IMR-90 (cell line): ENCODE measurements at regions of chr1 and their contacts with region 1.

Region 1: GRCh38 chr1:169106095-169106920 is at the start of gene ATP1B1:
- DNase-seq: peak; percentile 71
- ATAC-seq: peak; percentile 90
- H3K4me3 ChIP-seq: peak within 1 kb of the TSS; percentile 97
- H3K27ac ChIP-seq: peak within 1 kb of the TSS; percentile 64
- H3K4me1 ChIP-seq: peaks cover 17% of the 10 kb centered on the region
- H3K27me3 ChIP-seq: peaks cover 7% of the 10 kb centered on the region
- CTCF ChIP-seq: peak; percentile 32
- POLR2A ChIP-seq: peak; percentile 96
- RAD21 ChIP-seq: peak; percentile 13; the same call in 1 of the 2 replicates
- total RNA-seq, gene ATP1B1: 14.5 and 20.3 TPM in 2 replicates

Region 2: DNA sequence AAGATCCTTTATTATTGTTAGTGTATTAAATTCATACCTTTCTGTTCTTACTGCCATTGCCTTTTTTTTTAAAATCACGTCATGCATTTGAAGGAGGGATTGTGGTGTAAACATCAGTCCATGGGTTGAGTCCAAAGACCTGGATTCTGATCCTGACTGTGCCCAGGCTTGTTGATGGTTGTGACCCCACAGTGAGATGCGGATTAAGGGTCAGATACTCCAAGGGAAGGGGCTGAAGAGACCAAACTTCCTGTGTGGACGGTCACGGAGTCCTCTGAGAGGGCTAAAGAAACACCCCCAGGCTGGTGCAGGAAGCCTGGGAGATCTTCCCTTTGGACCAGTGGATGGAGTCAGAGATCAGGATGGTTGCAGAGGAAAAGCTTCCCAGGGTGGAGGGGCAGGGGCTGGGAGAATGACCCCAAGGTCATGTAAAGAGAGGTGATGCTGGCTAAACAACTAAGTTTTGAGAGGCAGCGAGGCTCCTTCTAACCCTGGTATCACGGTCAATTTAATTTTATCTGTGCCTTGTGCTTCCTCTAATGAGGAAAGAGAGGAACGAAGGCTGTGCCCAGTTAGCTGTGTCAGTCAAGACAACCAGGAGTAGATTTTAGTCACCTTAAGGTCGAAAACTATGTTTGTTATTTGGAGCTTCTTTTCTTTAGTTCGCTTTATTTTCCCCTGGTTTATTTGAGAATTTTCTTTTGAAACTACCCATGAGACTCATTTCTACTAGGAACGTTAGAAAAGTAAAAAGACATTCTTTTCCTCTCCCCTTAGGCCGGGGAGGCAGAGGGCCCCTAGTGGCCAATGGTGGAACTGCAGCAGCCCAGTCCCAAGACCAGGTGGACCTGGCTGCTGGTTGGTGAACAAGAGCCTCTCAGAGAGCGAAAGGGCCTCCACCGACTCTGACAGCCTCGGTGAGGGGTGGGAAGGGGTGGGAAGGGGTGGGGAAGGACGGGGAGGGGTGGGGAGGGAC is 960.8 kb before region 1 on chr1:
- CTCF ChIA-PET with region 1: no interaction called
- POLR2A ChIA-PET with region 1: no interaction called
- dilution Hi-C with region 1: no loop called
- in situ Hi-C with region 1: loop called (anchors 25 kb)
- intact Hi-C with region 1: no loop called
- DNase-seq: peak; percentile 79
- ATAC-seq: peak; percentile 100
- H3K4me3 ChIP-seq: no peak overlapping the region
- H3K27ac ChIP-seq: no peak overlapping the region
- H3K4me1 ChIP-seq: no peaks in the 10 kb centered on the region
- H3K27me3 ChIP-seq: peaks cover 2% of the 10 kb centered on the region; the same call in 1 of the 2 replicates
- CTCF ChIP-seq: peak; percentile 89
- POLR2A ChIP-seq: no peak
- RAD21 ChIP-seq: peak; percentile 58

Region 3: GRCh38 chr1:169326956-169327268 is 220.6 kb after region 1 on chr1:
- CTCF ChIA-PET with region 1: no interaction called
- POLR2A ChIA-PET with region 1: no interaction called
- dilution Hi-C with region 1: no loop called
- in situ Hi-C with region 1: no loop called
- intact Hi-C with region 1: loop called (anchors 5 kb)
- DNase-seq: peak; percentile 59
- ATAC-seq: peak; percentile 75; the same call in 1 of the 2 replicates
- H3K4me3 ChIP-seq: no peak overlapping the region
- H3K27ac ChIP-seq: no peak overlapping the region
- H3K4me1 ChIP-seq: no peaks in the 10 kb centered on the region
- H3K27me3 ChIP-seq: no peaks in the 10 kb centered on the region
- CTCF ChIP-seq: no peak
- POLR2A ChIP-seq: no peak
- RAD21 ChIP-seq: no peak

Region 4: GRCh38 chr1:169348383-169349036 is 242.2 kb after region 1 on chr1:
- CTCF ChIA-PET with region 1: interaction called, 6 read pairs
- POLR2A ChIA-PET with region 1: no interaction called
- dilution Hi-C with region 1: no loop called
- in situ Hi-C with region 1: no loop called
- intact Hi-C with region 1: loop called (anchors 2 kb)
- DNase-seq: peak; percentile 68
- ATAC-seq: peak; percentile 62; the same call in 1 of the 2 replicates
- H3K4me3 ChIP-seq: no peak overlapping the region
- H3K27ac ChIP-seq: no peak overlapping the region
- H3K4me1 ChIP-seq: no peaks in the 10 kb centered on the region
- H3K27me3 ChIP-seq: no peaks in the 10 kb centered on the region
- CTCF ChIP-seq: peak; percentile 86
- POLR2A ChIP-seq: no peak
- RAD21 ChIP-seq: peak; percentile 90

Region 5: DNA sequence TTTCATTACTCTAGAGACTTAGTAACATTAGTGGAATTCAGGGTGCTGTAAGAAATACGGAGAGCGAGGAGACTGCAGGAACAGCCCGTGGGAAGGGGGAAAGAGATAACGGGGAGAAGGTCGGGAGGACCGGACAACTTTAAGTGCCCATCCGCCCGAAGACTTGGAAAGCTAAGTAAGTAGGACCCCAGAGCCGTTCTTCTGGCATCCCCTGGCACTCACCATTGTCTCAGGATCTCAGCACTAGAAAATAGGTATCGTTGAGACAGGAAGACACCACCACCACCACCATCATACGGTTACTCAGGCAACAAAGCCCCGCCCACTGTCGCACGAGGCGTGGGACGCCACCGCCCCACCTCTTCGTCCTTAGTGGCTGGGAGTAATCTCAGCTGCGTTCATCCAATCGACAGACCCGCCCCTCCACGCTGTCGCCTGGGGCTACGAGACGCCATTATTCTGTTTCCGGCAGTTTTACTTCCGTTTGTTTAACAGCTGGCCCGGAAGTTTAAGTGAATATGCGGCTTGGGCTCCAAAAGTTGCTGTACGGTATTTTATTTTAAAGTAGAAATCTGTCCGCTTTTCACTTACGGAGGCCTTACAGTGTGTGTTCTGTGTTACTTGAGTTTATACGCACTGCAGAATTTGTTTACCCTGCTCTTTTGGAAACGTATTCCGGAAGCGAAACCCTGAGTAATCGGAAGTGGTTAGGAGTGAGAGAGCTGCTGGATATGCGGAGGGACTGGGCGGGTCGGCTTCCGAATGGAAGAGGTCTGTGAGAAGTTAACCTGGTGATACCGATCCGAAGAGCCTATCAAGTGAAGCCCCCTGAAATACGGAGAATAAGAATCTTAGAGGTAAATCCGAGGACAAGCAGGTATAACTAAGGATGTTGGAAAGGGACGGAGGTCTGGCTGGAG is 261.4 kb after region 1 on chr1 and contains the starts of genes BLZF1 and NME7:
- CTCF ChIA-PET with region 1: no interaction called
- POLR2A ChIA-PET with region 1: no interaction called
- dilution Hi-C with region 1: no loop called
- in situ Hi-C with region 1: no loop called
- intact Hi-C with region 1: loop called (anchors 5 kb)
- DNase-seq: peak; percentile 96
- ATAC-seq: peak; percentile 99
- H3K4me3 ChIP-seq: peak within 1 kb of the TSS; percentile 48
- H3K27ac ChIP-seq: peak within 1 kb of the TSS; percentile 62
- H3K4me1 ChIP-seq: 0 out of 2 replicates have a peak, but pooled peaks cover 4% of the 10 kb centered on the region
- H3K27me3 ChIP-seq: no peaks in the 10 kb centered on the region
- CTCF ChIP-seq: no peak
- POLR2A ChIP-seq: peak; percentile 81
- RAD21 ChIP-seq: no peak
- total RNA-seq, gene BLZF1: 24.2 and 38.9 TPM in 2 replicates
- total RNA-seq, gene NME7: 18.3 and 44.4 TPM in 2 replicates

Region 6: GRCh38 chr1:170707959-170708655 is 1601.8 kb after region 1 on chr1:
- CTCF ChIA-PET with region 1: no interaction called
- POLR2A ChIA-PET with region 1: no interaction called
- dilution Hi-C with region 1: no loop called
- in situ Hi-C with region 1: loop called (anchors 25 kb)
- intact Hi-C with region 1: no loop called
- DNase-seq: peak; percentile 99
- ATAC-seq: peak; percentile 81
- H3K4me3 ChIP-seq: no peak overlapping the region
- H3K27ac ChIP-seq: no peak overlapping the region
- H3K4me1 ChIP-seq: peaks cover 8% of the 10 kb centered on the region
- H3K27me3 ChIP-seq: no peaks in the 10 kb centered on the region
- CTCF ChIP-seq: no peak
- POLR2A ChIP-seq: no peak
- RAD21 ChIP-seq: 0 out of 2 replicates have a peak, but pooled peaks have one; percentile 6